ENCODE measurements at regions of chr1 and their contacts with region 1.

Region 1: GRCh38 chr1:113389953-113390834 is at the start of gene MAGI3:
- DNase-seq: peak; percentile 98 to 99 (median 98)
- H3K4me3 ChIP-seq: peak within 1 kb of the TSS; percentile 30 to 98 (median 51)
- H3K27ac ChIP-seq: peak within 1 kb of the TSS in 4 of 5 donors; percentile 73 to 92 (median 82)
- H3K4me1 ChIP-seq: peaks cover 7 to 39% of the 10 kb centered on the region in 2 donors
- H3K27me3 ChIP-seq: no peaks in the 10 kb centered on the region
- CTCF ChIP-seq: no peak
- POLR2A ChIP-seq: peak; percentile 67 to 90
- total RNA-seq, gene MAGI3: 10.1 to 17.6 (median 15.0) TPM

Region 2: GRCh38 chr1:113146242-113147072 is 243.7 kb before region 1 on chr1:
- intact Hi-C with region 1: loop called in 1 of 2 experiments (anchors 5 kb)
- DNase-seq: no peak
- H3K4me3 ChIP-seq: no peak overlapping the region
- H3K27ac ChIP-seq: no peak overlapping the region
- H3K4me1 ChIP-seq: peaks cover 6 to 17% of the 10 kb centered on the region in 2 donors
- H3K27me3 ChIP-seq: no peaks in the 10 kb centered on the region
- CTCF ChIP-seq: no peak
- POLR2A ChIP-seq: no peak

Region 3: DNA sequence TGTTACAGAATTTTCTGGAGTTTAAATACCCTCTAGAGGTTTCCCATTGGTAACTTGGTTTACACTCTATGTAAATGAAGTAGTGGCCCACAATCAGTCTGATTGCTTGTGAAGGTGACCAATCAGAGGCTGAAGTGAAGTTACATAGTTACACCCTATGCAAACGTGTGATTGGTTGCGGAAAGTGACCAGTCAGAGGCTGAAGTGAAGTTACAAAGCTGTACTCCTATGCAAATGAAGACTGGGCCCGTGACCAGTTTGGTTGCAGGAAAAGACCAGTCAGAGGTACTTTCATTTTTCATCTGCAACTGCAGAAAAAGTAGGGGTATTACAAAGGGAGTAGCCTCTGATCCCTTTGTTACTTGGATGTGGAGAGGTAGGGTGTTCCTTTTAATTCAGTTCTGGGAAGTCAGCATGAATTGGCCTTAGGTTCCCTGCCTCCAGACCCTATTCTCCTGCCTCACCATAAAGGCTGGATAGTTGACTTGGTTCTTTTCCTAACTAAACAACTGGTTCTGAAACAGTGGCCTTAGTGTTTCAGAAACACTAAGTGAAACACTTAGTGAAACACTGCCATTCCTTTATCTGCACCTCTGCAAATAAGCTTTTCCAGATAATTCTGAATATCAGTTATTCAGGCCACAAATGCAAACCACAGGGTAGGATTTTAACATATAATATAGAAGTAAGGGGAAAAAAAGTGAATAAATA is 39.4 kb after region 1 on chr1:
- intact Hi-C with region 1: no loop called
- DNase-seq: no peak
- H3K4me3 ChIP-seq: no peak overlapping the region
- H3K27ac ChIP-seq: no peak overlapping the region
- H3K4me1 ChIP-seq: peaks cover 2 to 4% of the 10 kb centered on the region in 2 donors
- H3K27me3 ChIP-seq: no peaks in the 10 kb centered on the region
- CTCF ChIP-seq: no peak
- POLR2A ChIP-seq: no peak

Region 4: DNA sequence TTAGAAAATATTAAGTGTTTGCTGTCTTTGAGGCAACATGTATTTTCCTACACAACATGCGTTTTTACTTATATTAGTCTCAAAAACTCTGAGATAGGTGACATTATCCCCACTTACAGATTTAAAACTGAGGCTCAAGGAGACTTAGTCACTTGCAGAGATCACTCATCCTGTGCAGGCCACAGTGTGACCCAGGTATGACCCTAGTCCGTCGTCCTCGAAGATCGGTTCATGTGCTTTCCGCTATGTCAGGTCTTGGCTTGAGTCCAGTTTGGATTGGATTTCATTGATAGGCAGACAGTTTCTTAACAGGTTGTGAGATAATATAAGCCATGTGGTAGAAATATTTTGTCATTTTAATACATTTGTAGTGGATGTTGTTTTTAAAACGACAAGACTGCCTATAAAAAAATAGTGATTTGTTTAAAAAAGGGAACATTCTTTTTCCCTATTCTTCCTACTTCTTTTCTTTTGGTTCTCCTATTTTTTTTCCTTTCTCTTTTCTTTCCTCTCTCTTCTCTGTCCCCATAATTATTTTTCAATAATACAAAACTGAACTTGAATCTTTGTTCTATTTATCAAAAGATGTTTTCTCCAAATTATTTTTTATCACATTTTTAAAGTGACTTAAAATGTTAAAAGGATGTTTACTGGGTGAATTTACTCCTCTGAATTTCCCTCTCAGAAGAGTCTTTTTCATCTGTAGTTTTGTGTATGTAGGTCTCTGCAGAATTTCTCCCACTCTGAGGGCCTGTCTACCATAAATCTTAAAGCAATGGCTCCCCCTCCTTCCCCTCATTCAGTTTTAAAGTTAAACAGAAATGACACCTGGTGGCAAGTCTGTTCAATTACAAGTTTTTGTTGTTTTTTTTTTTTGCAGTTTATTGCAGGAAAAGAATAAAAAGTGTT is 287.3 kb after region 1 on chr1:
- intact Hi-C with region 1: loop called in 1 of 2 experiments (anchors 5 kb)
- DNase-seq: peak; percentile 52 to 89 (median 78)
- H3K4me3 ChIP-seq: no peak overlapping the region
- H3K27ac ChIP-seq: peak overlapping the region in 1 of 5 donors; percentile 5
- H3K4me1 ChIP-seq: peaks cover 6 to 13% of the 10 kb centered on the region in 2 donors
- H3K27me3 ChIP-seq: no peaks in the 10 kb centered on the region
- CTCF ChIP-seq: peak; percentile 48 to 83 (median 62)
- POLR2A ChIP-seq: no peak